Gastrocnemius medialis (tissue), 4 donors: ENCODE measurements at regions of chr10 and their contacts with region 1.

Region 1: GRCh38 chr10:45464958-45465567 is 91.0 kb downstream of the ALOX5 start:
- DNase-seq: peak in 1 of 2 donors; percentile 50
- ATAC-seq: peak; percentile 56 to 88
- H3K4me3 ChIP-seq: no peak overlapping the region
- H3K27ac ChIP-seq: no peak overlapping the region
- H3K4me1 ChIP-seq: peaks cover 3 to 5% of the 10 kb centered on the region in 2 donors
- H3K27me3 ChIP-seq: no peaks in the 10 kb centered on the region
- CTCF ChIP-seq: peak; percentile 72 to 89 (median 79)
- POLR2A ChIP-seq: no peak

Region 2: DNA sequence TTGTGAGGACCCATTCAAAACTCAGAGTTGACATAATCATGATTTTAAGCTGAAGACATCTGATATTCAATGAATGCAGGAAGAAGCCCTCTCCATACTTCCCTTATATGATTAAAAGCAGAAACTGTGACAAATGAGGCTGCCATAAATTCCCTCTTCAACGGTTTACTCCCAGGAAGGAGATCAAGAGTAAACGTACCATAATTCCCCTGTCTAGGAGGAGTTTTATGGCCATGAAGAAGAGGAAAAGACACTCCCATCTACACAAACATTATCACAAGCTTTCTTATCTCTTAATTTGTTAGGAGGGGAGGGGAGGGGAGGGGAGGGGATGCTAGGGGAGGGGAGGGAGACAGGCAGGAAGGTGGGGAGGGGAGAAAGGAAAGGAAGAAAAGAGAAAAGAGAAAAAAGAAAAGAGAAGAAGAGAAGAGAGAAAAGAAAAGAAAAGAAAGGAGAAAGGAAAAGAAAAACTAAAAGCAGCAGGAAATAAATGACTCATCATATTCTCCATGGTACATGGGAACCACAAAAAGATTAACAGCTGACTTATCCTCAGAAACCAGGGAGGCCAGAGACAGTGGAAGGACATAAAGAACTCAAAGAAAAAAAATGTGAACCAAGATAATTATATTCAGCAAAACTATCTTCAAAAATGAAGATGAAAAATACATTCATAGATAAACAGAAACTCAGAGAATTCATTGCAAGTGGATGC is 30.5 kb after region 1 on chr10:
- in situ Hi-C with region 1: no loop called
- intact Hi-C with region 1: no loop called
- DNase-seq: no peak
- ATAC-seq: no peak
- H3K4me3 ChIP-seq: no peak overlapping the region
- H3K27ac ChIP-seq: no peak overlapping the region
- H3K4me1 ChIP-seq: no peaks in the 10 kb centered on the region
- H3K27me3 ChIP-seq: no peaks in the 10 kb centered on the region
- CTCF ChIP-seq: no peak
- POLR2A ChIP-seq: no peak

Region 3: GRCh38 chr10:45594276-45595106 is 129.4 kb after region 1 on chr10:
- in situ Hi-C with region 1: no loop called
- intact Hi-C with region 1: loop called (anchors 2 kb)
- DNase-seq: peak; percentile 85 to 89
- ATAC-seq: peak; percentile 87 to 94
- H3K4me3 ChIP-seq: peak overlapping the region; percentile 80 to 83 (median 82)
- H3K27ac ChIP-seq: peak overlapping the region; percentile 69 to 88 (median 74)
- H3K4me1 ChIP-seq: peaks cover 21 to 22% of the 10 kb centered on the region in 2 donors
- H3K27me3 ChIP-seq: peaks cover 1 to 4% (median 2%) of the 10 kb centered on the region in 3 donors
- CTCF ChIP-seq: peak in 2 of 5 experiments; percentile 39 to 52
- POLR2A ChIP-seq: peak; percentile 28 to 77